Ovary (tissue), 10 donors: ENCODE measurements at regions of chr1 and their contacts with region 1.

Region 1: GRCh38 chr1:227946624-227947385 is 927 bp downstream of the WNT9A start:
- DNase-seq: peak; percentile 77 to 89 (median 83)
- H3K4me3 ChIP-seq: peak overlapping the region; percentile 67
- H3K27ac ChIP-seq: peak overlapping the region; percentile 70 to 79
- H3K4me1 ChIP-seq: peaks cover 10% of the 10 kb centered on the region
- H3K27me3 ChIP-seq: no peaks in the 10 kb centered on the region
- CTCF ChIP-seq: peak; percentile 71 to 84 (median 83)
- EP300 ChIP-seq: no peak
- POLR2A ChIP-seq: no peak

Region 2: GRCh38 chr1:227447531-227447990 is 499.2 kb before region 1 on chr1:
- intact Hi-C with region 1: no loop called
- DNase-seq: peak in 3 of 5 donors; percentile 20 to 65 (median 34)
- H3K4me3 ChIP-seq: no peak overlapping the region
- H3K27ac ChIP-seq: no peak overlapping the region
- H3K4me1 ChIP-seq: no peaks in the 10 kb centered on the region
- H3K27me3 ChIP-seq: no peaks in the 10 kb centered on the region
- CTCF ChIP-seq: peak in 1 of 3 donors; percentile 16
- EP300 ChIP-seq: no peak
- POLR2A ChIP-seq: no peak

Region 3: GRCh38 chr1:227482023-227482299 is 464.8 kb before region 1 on chr1:
- intact Hi-C with region 1: loop called (anchors 5 kb)
- DNase-seq: no peak
- H3K4me3 ChIP-seq: no peak overlapping the region
- H3K27ac ChIP-seq: no peak overlapping the region
- H3K4me1 ChIP-seq: no peaks in the 10 kb centered on the region
- H3K27me3 ChIP-seq: no peaks in the 10 kb centered on the region
- CTCF ChIP-seq: no peak
- EP300 ChIP-seq: no peak
- POLR2A ChIP-seq: no peak

Region 4: DNA sequence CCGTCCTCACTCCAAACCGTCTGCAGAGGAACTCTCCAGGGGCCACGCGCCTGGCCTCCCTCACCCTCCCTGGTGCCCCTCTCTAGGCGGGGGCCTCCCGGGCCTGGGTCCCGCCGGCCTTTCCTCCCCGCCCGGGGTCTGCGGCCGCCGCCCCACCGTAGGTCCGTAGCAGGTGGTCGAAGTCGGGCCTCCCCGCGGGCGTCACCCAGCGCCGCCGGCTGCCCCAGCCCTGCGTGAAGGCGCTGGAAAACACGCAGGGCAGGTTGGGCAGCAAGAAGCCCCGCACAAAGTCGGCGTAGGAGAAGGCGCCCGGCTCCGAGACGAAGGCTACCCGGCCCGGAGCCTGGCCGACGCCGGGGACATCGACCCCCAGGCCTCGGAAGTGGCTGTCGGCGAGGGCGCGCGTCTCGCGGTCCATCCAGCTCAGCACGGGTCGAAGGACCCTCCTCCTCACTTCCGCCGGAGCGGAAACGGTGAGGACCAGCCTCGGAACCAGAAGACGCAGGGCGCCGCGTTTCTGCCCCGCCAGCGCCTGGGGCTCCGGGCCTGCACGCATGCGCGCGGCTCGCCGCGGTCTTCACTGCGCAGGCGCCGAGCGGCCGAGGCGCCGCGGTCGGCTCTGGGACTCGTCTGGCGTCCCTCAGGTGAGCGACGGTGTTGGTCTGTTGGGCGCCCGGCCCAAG is 211.8 kb before region 1 on chr1 and contains the starts of genes JMJD4 and SNAP47:
- intact Hi-C with region 1: loop called in 3 of 4 experiments (anchors 5 to 10 kb)
- DNase-seq: peak; percentile 89 to 95 (median 93)
- H3K4me3 ChIP-seq: peak within 1 kb of the TSS; percentile 93
- H3K27ac ChIP-seq: peak within 1 kb of the TSS; percentile 81 to 91
- H3K4me1 ChIP-seq: peaks cover 27% of the 10 kb centered on the region
- H3K27me3 ChIP-seq: no peaks in the 10 kb centered on the region
- CTCF ChIP-seq: no peak
- EP300 ChIP-seq: no peak
- POLR2A ChIP-seq: peak; percentile 85
- total RNA-seq, gene JMJD4: 23.9 to 28.9 (median 26.4) TPM
- total RNA-seq, gene SNAP47: 63.5 to 135 (median 106) TPM

Region 5: DNA sequence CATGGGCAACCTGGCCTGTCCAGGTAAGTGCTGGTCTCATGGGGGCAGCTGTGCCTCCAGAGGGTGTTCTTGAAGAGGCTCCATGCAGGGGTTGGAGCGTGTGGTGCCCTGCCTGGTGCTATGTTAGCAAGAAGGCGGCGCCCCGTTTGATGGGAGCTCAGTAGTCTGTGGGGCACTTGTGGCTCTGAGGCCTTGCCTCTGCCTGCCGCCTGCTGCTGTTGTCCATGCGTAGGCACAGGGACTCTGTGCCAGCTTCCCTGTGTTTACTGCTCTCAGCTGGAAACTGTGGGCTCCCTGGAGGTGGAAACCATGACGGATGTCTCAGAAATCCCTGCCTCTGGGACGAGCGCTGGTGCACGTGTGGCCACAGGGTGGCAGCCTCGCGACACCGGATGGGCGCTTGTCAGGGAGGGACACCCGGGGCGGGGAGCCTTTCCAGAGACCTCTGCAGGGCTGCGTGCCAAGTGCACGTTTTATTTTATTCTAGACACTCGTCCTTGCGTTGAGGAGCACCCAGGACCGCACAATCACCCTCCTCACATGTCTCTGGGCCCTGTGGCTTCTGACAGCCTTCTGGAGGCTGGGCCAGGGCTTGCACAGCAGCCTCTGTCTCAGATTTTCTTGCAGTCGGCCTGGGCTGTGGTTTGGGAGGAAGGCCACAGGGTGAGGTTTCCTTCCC is 184.4 kb before region 1 on chr1:
- intact Hi-C with region 1: loop called (anchors 2 to 10 kb)
- DNase-seq: peak; percentile 79 to 89 (median 88)
- H3K4me3 ChIP-seq: no peak overlapping the region
- H3K27ac ChIP-seq: peak overlapping the region in 1 of 2 donors; percentile 54
- H3K4me1 ChIP-seq: peaks cover 2% of the 10 kb centered on the region
- H3K27me3 ChIP-seq: no peaks in the 10 kb centered on the region
- CTCF ChIP-seq: peak; percentile 76 to 87 (median 82)
- EP300 ChIP-seq: no peak
- POLR2A ChIP-seq: no peak

Region 6: GRCh38 chr1:228068359-228068758 is 121.6 kb after region 1 on chr1:
- intact Hi-C with region 1: loop called in 1 of 4 experiments (anchors 2 kb)
- DNase-seq: no peak
- H3K4me3 ChIP-seq: no peak overlapping the region
- H3K27ac ChIP-seq: no peak overlapping the region
- H3K4me1 ChIP-seq: peaks cover 4% of the 10 kb centered on the region
- H3K27me3 ChIP-seq: no peaks in the 10 kb centered on the region
- CTCF ChIP-seq: no peak
- EP300 ChIP-seq: no peak
- POLR2A ChIP-seq: no peak